A673 (cell line): ENCODE measurements at regions of chr12 and their contacts with region 1.

Region 1: GRCh38 chr12:49358483-49359141 is 8.7 kb upstream of the SPATS2 start:
- DNase-seq: peak; percentile 89
- H3K4me3 ChIP-seq: peak overlapping the region; percentile 5
- H3K27ac ChIP-seq: no peak overlapping the region
- H3K4me1 ChIP-seq: peaks cover 5% of the 10 kb centered on the region
- H3K27me3 ChIP-seq: no peaks in the 10 kb centered on the region
- CTCF ChIP-seq: peak; percentile 89

Region 2: DNA sequence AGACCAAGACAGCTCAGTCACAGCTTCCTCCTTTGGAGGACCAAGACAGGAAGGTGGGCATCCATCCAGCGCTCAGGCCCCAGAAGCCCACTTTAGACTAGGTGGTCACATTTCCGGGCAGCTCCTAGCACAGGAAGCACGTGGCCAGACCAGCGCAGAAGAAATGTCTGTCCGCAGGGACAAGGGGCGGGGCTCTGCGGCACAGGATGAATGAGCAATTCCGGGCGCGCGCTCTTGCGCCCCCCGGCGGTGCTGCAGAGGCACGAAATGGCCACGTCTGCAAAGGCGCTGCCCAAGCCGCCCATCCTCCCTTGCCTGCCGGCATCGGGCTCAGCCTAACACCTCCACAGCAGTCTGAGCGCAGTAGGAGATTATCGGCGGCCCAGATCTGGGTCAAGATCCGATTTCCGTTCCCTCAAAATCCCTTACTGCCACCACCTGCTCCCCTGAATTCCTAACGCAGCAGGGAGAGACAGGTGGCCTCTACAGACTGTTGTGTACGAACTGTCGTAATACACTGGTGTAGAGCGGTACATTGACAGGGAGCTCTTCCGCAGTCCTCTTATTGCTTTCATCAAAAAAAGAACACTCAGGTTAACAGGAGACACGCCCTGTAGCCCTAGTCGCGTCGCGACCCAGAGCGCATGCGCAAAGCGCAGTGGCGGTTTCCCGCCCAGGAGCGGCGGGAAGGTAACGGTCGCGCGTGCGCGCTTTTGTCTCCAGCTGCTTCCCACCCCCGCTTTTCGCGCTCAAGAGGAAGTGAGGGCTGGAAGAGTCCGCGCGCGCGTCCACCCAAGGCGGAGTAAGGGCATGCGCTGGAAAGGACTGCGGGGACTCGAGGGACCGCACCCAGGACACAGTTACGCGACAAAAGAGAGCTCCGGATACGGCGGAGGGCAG is 228.2 kb before region 1 on chr12:
- CTCF ChIA-PET with region 1: no interaction called
- POLR2A ChIA-PET with region 1: no interaction called
- intact Hi-C with region 1: no loop called
- DNase-seq: peak; percentile 94
- H3K4me3 ChIP-seq: peak overlapping the region; percentile 99
- H3K27ac ChIP-seq: peak overlapping the region; percentile 100
- H3K4me1 ChIP-seq: peaks cover 25% of the 10 kb centered on the region
- H3K27me3 ChIP-seq: no peaks in the 10 kb centered on the region
- CTCF ChIP-seq: peak; percentile 97

Region 3: DNA sequence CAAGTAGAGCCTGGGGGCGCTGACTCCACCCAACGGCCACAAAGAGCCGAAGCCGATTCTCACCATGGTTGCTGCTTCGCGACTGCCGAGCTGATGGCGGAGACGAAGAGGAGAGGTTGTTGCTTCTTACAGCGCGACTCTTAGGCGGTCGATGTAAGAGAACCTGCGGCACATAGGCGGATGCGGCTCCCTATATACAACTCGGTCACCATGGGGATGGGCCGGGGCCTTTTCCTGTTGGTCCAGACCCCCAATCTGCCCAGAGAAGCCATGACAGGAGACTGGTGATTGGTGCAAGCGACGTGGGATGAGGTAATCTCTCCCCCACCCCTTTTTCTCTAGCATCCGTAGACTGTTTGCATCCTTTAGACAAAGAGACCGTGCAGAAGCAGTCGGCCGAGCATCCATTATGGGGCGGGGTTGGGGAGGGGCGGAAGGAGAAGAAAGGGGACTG is 169.7 kb before region 1 on chr12 and contains the start of gene TUBA1A:
- CTCF ChIA-PET with region 1: no interaction called
- POLR2A ChIA-PET with region 1: interaction called, 11 read pairs
- intact Hi-C with region 1: no loop called
- DNase-seq: peak; percentile 100
- H3K4me3 ChIP-seq: peak within 1 kb of the TSS; percentile 94
- H3K27ac ChIP-seq: peak within 1 kb of the TSS; percentile 89
- H3K4me1 ChIP-seq: peaks cover 21% of the 10 kb centered on the region
- H3K27me3 ChIP-seq: no peaks in the 10 kb centered on the region
- CTCF ChIP-seq: no peak
- total RNA-seq, gene TUBA1A: 421 and 504 TPM in 2 replicates

Region 4: DNA sequence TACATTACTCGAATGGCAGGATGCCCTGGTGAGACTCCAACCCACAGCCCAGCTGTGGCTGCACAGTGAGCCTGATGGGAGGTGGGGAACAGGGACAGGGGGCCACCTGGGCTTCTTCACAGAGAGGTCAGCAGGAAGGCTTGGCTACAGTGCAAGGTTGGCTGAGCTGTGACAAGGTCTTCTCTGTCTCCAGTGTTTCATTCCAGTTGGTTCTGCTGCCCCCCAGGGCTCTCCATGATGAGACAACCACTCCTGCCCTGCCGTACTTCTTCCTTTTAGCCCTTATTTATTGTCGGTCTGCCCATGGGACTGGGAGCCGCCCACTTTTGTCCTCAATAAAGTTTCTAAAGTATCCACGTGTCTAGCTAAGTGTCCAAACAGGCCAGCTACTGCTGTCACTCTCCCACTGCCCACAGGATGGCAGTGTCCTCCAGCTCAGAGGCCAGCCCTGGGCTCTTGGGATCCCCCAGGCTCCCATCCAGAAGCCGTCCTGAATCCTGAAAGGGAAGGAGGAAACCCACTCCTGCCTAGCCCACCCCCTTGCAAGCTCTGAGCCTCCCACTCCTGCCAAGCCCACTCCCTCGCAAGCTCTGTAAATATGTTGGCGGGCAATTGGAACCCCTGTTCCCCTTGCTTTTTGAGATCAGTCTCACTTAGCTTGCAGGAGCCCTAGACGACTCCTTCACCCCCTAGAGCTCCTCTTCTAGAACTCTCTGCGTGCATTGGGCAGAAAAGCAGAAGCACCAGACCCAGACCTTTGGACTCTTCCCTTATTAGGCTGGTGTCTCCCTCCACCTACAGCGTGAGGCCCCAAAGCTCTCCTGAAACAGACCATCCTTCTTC is 27.0 kb before region 1 on chr12:
- CTCF ChIA-PET with region 1: interaction called, 13 read pairs
- POLR2A ChIA-PET with region 1: no interaction called
- intact Hi-C with region 1: no loop called
- DNase-seq: peak; percentile 78
- H3K4me3 ChIP-seq: no peak overlapping the region
- H3K27ac ChIP-seq: no peak overlapping the region
- H3K4me1 ChIP-seq: no peaks in the 10 kb centered on the region
- H3K27me3 ChIP-seq: no peaks in the 10 kb centered on the region
- CTCF ChIP-seq: peak; percentile 74

Region 5: DNA sequence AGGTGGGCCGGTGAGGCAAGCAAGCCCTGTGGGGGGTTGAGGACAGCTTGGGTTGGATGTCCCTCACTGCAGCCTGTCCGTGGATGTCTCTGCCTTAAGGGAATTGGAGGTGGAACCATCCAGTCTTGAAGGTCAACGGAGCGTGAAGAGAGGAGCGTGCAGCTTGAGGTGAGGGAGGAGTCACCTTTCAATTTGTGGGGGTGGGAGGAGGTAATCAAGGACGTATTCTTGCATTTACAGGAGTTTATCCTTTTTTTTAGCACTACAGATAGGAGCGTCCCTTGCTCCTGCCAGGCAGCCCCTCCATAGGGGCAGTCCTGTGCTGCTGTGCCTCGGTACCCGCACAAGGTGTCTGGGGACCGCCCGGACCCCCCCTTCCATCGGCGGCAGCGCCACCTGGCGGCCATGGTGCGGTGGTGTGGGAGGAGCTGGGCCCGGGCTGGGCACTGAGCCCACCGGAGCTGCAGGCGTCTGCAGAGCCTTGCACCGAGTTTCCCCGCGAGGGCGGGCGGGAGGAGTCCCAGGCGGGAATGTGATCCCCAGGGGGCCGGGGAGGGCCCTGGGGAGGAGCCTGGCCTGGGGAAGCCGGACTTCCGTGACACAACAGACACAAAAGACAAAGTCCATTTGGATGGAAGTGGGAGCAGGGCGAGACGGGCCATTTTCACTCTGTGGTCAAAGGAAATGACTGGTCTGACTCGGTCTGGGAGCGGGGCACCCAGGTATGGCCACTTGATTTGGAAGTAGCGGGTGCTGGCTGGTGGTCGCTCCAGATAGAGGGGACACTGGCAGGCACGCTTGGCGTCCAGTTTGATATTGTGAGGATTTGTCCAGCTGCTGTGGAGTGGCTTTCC is 11.0 kb before region 1 on chr12:
- CTCF ChIA-PET with region 1: interaction called, 18 read pairs
- POLR2A ChIA-PET with region 1: no interaction called
- intact Hi-C with region 1: no loop called
- DNase-seq: peak; percentile 92
- H3K4me3 ChIP-seq: peak overlapping the region; percentile 51
- H3K27ac ChIP-seq: peak overlapping the region; percentile 15
- H3K4me1 ChIP-seq: peaks cover 33% of the 10 kb centered on the region
- H3K27me3 ChIP-seq: peaks cover 14% of the 10 kb centered on the region
- CTCF ChIP-seq: peak; percentile 99

Region 6: DNA sequence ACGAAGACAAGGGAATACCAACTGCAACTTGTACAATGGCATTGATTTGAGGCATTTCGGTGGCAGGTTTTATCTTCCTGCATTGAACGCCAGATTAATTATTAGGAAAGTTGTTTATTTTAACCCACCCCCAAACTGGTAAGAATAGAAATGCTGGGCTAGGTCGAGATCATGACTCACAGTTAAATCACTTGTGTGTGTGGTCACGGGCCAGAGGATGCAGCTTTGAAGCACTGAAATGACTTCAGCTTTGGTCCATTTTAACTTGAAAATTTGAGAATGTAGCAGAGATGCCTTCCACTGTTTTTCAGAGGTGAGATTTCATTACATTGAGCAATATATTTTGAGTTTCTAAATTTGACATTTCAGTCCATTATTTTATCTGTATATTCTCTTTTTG is 156.7 kb after region 1 on chr12:
- CTCF ChIA-PET with region 1: interaction called, 79 read pairs
- POLR2A ChIA-PET with region 1: interaction called, 5 read pairs
- intact Hi-C with region 1: loop called (anchors 1 kb)
- DNase-seq: no peak
- H3K4me3 ChIP-seq: no peak overlapping the region
- H3K27ac ChIP-seq: no peak overlapping the region
- H3K4me1 ChIP-seq: peaks cover 13% of the 10 kb centered on the region
- H3K27me3 ChIP-seq: no peaks in the 10 kb centered on the region
- CTCF ChIP-seq: no peak